Activated naive CD4-positive, alpha-beta T cell treated with anti-CD3 and anti-CD28 coated beads for 36 hours (primary cell): ENCODE measurements at regions of chr1 and their contacts with region 1.

Region 1: DNA sequence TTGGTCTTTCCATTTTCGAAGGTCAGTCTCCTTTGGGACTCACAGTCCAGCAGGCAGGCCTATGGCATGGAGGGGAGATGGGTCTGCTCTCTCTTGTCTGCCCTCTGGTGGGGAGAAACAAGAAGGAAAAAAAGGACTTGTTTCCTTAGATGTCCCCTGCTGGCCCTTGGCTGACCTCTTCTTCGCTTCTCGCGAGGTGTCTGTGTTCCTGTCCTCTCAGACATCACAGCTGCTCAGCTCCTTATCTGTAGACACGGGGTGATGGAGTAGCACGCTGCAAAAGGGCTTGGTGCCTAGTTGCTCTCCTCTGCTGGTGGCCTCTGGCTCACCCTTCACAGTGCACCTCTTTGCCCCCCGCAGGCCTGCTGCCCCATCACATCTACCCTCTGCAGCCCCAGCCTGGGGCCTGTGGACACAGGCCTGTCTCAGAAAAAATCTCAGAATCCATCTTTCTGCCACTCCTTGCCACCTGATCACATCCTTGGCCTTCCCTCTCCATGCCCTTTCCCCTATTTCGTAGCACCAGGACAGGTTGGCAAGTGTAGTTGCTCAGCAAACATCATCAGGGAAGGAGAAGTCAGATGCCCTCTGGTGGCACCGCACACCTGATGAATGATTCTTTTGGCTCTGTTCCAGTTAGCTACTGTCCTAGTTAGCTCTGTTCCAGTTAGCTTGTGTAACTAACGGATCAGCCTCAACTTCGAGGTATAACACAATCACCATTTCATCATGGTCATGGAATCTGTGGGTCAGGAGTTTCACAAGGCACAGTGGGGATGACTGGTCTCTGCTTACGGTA is 18.7 kb upstream of the AK2 start:
- DNase-seq: peak; percentile 36
- H3K4me3 Mint-ChIP-seq: no peak overlapping the region
- H3K27ac Mint-ChIP-seq: no peak overlapping the region
- H3K4me1 Mint-ChIP-seq: peaks cover 4% of the 10 kb centered on the region
- H3K27me3 Mint-ChIP-seq: no peaks in the 10 kb centered on the region

Region 2: DNA sequence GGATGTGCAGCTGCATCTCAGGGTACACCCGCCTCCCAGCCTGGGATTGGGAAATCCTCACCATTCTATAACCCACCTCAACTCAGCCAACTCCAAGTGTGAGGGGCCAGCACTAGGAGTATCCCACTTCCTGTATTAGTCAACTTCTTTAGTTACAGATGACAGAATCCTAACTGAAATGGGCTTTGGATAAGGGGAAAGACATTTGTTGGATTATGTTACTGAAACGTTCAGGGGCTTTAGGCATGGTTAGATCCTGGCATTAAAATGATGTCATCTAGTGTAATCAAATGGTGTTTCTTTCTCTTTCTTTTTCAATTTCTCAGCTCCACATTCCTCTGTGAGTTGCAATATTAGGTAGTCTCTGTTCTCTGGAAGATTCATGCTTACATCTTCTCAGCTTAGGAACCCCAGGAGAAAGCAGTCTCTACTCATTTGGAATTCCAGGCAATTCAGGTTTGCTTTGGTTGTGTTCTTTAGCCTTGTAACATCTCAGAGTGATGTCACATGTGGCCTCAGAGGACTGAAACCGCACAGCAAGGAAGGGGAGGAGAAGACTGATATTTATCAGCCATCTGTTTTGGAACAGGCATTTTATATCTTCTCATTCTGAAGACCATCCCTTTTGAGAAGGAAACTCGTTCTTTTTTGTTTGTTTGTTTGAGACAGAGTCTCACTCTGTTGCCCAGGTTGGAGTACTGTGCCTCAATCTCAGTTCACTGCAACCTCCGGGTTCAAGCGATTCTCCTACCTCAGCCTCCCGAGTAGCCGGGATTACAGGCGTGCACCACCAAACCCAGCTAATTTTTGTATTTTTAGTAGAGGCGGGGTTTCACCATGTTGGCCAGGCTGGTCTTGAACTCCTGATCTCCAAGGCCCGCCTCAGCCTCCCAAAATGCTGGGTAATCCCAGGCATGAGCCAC is 135.3 kb before region 1 on chr1:
- CTCF ChIA-PET with region 1: interaction called, 17 read pairs
- intact Hi-C with region 1: no loop called
- DNase-seq: no peak
- H3K4me3 Mint-ChIP-seq: no peak overlapping the region
- H3K27ac Mint-ChIP-seq: peak overlapping the region; percentile 28
- H3K4me1 Mint-ChIP-seq: peaks cover 9% of the 10 kb centered on the region
- H3K27me3 Mint-ChIP-seq: peaks cover 36% of the 10 kb centered on the region

Region 3: DNA sequence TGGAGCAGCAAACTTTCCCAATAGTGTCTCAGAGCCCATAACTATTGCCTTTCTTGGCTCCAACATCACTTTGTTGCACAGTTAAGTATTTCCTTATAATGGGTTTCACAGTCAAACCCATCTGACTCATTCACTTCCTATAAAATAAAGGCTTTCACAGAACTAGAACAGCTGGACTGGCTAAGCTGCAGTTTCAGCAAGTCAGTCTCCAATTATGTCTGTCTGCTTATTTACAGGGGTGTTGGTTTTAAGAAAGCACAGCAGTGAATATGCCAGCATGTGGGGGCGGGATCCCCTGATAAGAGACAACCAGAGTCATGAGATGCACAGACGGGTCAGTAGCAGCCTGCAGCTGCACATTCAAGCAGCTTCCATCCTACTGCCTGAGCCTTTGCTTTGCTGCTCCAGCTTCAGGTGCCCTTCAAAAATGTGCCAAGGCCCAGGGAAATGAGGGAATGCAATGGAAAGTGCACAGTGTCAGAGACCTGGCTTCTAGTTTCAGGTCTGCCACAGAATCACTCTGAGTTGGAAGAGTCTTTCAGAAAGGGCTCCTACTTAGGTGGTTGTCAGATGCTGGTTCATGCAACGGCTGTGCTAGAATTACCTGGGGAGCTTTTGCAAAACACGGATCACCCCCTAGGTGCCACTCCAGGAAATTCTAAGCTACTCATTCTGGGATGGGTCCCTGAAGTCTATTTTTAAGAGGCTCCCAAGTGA is 115.6 kb before region 1 on chr1:
- CTCF ChIA-PET with region 1: interaction called, 84 read pairs
- intact Hi-C with region 1: no loop called
- DNase-seq: peak; percentile 30
- H3K4me3 Mint-ChIP-seq: no peak overlapping the region
- H3K27ac Mint-ChIP-seq: no peak overlapping the region
- H3K4me1 Mint-ChIP-seq: peaks cover 27% of the 10 kb centered on the region
- H3K27me3 Mint-ChIP-seq: no peaks in the 10 kb centered on the region

Region 4: DNA sequence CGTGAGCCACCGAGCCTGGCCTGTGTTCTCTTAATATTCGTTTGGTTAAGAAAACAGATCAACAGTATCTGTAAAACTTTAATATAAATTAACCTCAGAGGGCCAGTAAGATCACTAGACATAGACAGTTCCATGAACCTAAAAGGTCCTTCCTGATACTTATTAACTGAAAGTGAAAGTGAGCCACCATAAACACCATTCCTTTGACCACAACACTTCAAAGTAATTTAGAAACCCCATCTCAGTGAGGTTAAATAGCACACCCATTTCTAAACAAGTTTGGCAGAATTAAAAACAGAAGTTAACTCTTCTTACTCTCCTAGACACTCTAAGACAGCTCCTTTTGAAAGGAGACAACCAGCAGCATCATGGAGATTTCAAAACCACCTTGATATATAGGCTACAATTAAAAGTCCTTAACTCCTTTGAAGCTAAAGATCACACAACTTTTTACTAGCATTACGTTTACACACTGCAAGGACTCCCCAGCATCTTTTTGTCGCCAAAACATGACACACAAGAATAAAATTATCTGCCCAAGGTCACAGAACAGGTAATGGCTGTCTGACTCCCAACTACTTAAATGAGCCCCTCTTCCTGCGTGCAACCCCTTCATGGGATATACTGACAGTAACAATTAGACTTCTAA is 93.0 kb before region 1 on chr1:
- CTCF ChIA-PET with region 1: no interaction called
- intact Hi-C with region 1: no loop called
- DNase-seq: no peak
- H3K4me3 Mint-ChIP-seq: peak overlapping the region; percentile 80
- H3K27ac Mint-ChIP-seq: no peak overlapping the region
- H3K4me1 Mint-ChIP-seq: peaks cover 43% of the 10 kb centered on the region
- H3K27me3 Mint-ChIP-seq: no peaks in the 10 kb centered on the region